Activated B cell treated with CpG ODN at 0.5 μM for 24 hours (primary cell): ENCODE measurements at regions of chr16 and their contacts with region 1.

Region 1: DNA sequence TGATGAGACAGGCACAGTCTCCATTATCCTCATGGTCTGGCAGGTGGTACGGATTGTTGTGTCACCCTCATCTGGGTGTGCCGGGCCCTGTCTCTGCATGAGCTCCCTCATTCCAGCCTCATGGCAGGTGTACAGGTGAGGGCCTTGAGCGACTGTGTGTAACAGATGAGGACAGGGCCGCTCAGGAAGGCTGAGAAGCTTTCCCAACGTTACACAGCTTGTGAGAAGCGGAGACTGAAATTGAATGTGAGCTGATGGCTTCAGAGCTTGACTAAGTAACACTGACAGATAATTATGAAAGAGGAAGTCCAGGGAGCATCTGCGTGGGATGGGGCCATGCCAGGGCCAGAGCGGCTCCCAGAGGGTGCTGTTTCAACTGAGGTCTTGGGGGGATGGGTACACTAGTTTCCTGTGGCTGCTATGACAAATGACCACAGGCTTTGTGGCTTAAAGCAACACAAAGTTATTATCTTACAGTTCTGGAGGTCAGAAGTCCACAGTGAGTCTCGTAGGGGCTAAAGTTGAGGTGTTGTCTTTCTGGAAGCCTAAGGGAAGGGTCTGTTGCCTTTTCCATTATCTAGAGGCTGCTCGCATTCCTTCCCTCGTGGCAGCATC is 36.7 kb downstream of the CMIP start:
- DNase-seq: peak; percentile 58
- ATAC-seq: peak; percentile 84
- H3K4me3 Mint-ChIP-seq: peak overlapping the region; percentile 79
- H3K27ac Mint-ChIP-seq: peak overlapping the region; percentile 93
- H3K4me1 Mint-ChIP-seq: peaks cover 90% of the 10 kb centered on the region
- H3K27me3 Mint-ChIP-seq: no peaks in the 10 kb centered on the region
- CTCF ChIP-seq: no peak

Region 2: GRCh38 chr16:81444448-81445121 is 36.7 kb before region 1 on chr16 and contains the start of gene CMIP:
- CTCF ChIA-PET with region 1: interaction called, 3 read pairs
- POLR2A ChIA-PET with region 1: interaction called, 134 read pairs
- intact Hi-C with region 1: loop called (anchors 1 kb)
- DNase-seq: peak; percentile 88
- ATAC-seq: peak; percentile 82
- H3K4me3 Mint-ChIP-seq: peak within 1 kb of the TSS; percentile 87
- H3K27ac Mint-ChIP-seq: peak within 1 kb of the TSS; percentile 79
- H3K4me1 Mint-ChIP-seq: peaks cover 43% of the 10 kb centered on the region
- H3K27me3 Mint-ChIP-seq: no peaks in the 10 kb centered on the region
- CTCF ChIP-seq: no peak
- total RNA-seq, gene CMIP: 62.4 and 76.3 TPM in 2 replicates

Region 3: GRCh38 chr16:81469710-81470535 is 11.4 kb before region 1 on chr16:
- CTCF ChIA-PET with region 1: interaction called, 6 read pairs
- POLR2A ChIA-PET with region 1: interaction called, 82 read pairs
- intact Hi-C with region 1: loop called (anchors 1 kb)
- DNase-seq: no peak
- ATAC-seq: peak; percentile 88
- H3K4me3 Mint-ChIP-seq: peak overlapping the region; percentile 66
- H3K27ac Mint-ChIP-seq: peak overlapping the region; percentile 84
- H3K4me1 Mint-ChIP-seq: peaks cover 82% of the 10 kb centered on the region
- H3K27me3 Mint-ChIP-seq: no peaks in the 10 kb centered on the region
- CTCF ChIP-seq: no peak

Region 4: GRCh38 chr16:81513204-81514040 is 32.1 kb after region 1 on chr16:
- CTCF ChIA-PET with region 1: no interaction called
- POLR2A ChIA-PET with region 1: interaction called, 5 read pairs
- intact Hi-C with region 1: loop called (anchors 5 kb)
- DNase-seq: no peak
- ATAC-seq: peak; percentile 15
- H3K4me3 Mint-ChIP-seq: peak overlapping the region; percentile 72
- H3K27ac Mint-ChIP-seq: peak overlapping the region; percentile 61
- H3K4me1 Mint-ChIP-seq: peaks cover 51% of the 10 kb centered on the region
- H3K27me3 Mint-ChIP-seq: no peaks in the 10 kb centered on the region
- CTCF ChIP-seq: no peak